ENCODE measurements at regions of chr22 and their contacts with region 1.

Region 1: DNA sequence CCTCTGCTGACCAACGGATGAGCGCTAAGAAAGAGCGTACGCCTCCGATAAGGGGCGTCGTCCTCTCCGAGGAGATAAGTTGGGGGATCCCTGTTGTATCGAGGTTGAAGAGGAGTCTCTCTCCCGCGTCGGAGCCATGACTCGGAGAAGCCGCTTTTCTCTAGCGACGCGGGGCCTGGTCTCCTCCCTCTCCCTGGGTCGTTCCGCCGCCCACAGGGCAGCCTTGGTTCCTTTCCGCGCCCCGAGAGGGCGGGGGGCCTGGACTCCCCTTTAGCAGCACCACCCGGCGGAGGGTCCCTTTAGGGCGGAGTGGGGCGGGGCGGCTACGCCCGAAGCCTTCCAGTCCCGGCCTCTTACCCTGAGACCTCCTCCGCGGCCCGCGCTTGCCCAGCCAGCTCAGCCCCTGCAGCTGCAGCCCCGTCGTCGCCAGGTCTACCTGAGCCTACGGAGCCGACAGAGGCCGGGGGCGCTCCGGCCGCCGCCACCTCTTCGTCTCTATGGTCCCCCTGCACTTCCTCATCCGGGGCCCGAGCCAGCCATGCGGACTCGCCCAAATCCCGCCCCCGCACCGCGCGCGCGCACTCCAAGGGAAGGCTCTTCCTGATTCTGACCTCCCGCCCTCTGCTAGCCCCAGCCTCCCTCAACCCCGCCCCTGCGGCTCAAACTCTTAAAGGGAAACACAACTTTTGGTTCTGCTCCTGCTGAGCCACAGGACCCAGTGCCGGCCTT is at the start of gene PRR14L:
- DNase-seq: peak; percentile 91
- ATAC-seq: peak; percentile 83
- H3K4me3 ChIP-seq: peak within 1 kb of the TSS; percentile 79 to 96 (median 89)
- H3K27ac ChIP-seq: peak within 1 kb of the TSS; percentile 93
- H3K4me1 ChIP-seq: peaks cover 41% of the 10 kb centered on the region
- H3K27me3 ChIP-seq: peaks cover 0 to 6% of the 10 kb centered on the region in 2 experiments; a peak in 1 of 5 replicates
- CTCF ChIP-seq: peak; percentile 31; the same call in 1 of the 2 replicates
- EP300 ChIP-seq: peak; percentile 31 to 92; a peak in 3 of 4 replicates
- POLR2A ChIP-seq: peak; percentile 85 to 89
- RAD21 ChIP-seq: peak; percentile 69
- total RNA-seq, gene PRR14L: 16.5 and 36.4 TPM in 2 replicates

Region 2: GRCh38 chr22:31812977-31813605 is 63.3 kb after region 1 on chr22:
- CTCF ChIA-PET with region 1: no interaction called
- POLR2A ChIA-PET with region 1: interaction called, 23 read pairs
- in situ Hi-C with region 1: no loop called
- intact Hi-C with region 1: loop called (anchors 1 kb)
- DNase-seq: peak; percentile 22
- ATAC-seq: peak; percentile 26; the same call in 1 of the 3 replicates
- H3K4me3 ChIP-seq: no peak overlapping the region
- H3K27ac ChIP-seq: peak overlapping the region; percentile 36
- H3K4me1 ChIP-seq: peaks cover 40% of the 10 kb centered on the region
- H3K27me3 ChIP-seq: no peaks in the 10 kb centered on the region
- CTCF ChIP-seq: no peak
- EP300 ChIP-seq: peak in 1 of 2 experiments; percentile 23; a peak in 1 of 4 replicates
- POLR2A ChIP-seq: no peak
- RAD21 ChIP-seq: no peak

Region 3: DNA sequence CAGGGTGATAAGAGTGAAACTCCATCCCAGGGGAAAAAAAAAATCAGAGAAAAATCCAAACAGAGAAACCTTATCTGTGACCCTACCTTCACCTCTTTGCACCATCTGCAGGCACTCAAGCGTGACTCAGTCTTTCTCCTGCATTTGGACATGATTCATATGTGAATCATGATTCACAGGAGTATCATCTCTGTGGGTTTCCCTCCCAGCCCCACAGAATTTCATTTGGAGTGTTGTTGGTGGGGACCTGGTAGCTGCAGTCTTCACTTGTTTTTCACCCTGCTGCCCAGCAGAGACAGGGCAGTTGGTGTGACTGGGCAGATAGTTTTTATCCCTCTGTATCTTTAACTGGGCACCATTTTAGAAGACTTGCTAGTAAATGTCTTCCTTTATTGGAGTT is 79.7 kb after region 1 on chr22:
- CTCF ChIA-PET with region 1: no interaction called
- POLR2A ChIA-PET with region 1: interaction called, 10 read pairs
- in situ Hi-C with region 1: no loop called
- intact Hi-C with region 1: no loop called
- DNase-seq: peak; percentile 46
- ATAC-seq: no peak
- H3K4me3 ChIP-seq: no peak overlapping the region
- H3K27ac ChIP-seq: no peak overlapping the region
- H3K4me1 ChIP-seq: peaks cover 16% of the 10 kb centered on the region
- H3K27me3 ChIP-seq: no peaks in the 10 kb centered on the region
- CTCF ChIP-seq: no peak
- EP300 ChIP-seq: peak in 1 of 2 experiments; percentile 9; a peak in 1 of 4 replicates
- POLR2A ChIP-seq: no peak
- RAD21 ChIP-seq: no peak

Region 4: DNA sequence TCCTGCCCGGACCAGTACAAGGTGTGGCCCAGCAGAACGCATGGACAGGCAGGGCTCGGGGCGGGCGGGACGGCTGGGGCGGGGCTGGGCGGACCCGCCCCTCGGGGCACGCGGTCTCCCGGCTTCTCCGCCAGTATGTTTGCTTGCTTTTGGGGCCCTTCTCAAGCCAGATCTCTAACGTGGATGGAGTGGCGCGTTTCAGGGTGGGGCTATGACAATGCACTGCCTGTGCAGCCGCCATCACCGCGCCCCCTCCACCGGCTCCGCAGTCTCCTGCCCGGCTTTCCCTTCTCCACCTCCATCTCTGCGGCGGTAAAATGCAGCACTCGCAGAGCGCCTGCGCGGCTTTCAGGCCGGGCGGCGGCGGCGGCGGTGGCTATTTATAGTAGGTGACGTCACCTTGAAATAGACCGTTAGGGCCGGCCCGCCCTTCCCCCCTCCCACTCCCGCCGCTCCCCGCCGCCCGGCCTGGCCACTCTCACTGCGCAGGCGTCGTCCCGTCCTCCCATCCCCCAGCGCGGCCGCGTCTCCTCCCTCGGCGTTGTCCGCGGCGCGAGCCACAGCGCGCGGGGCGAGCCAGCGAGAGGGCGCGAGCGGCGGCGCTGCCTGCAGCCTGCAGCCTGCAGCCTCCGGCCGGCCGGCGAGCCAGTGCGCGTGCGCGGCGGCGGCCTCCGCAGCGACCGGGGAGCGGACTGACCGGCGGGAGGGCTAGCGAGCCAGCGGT is 194.3 kb after region 1 on chr22 and contains the start of gene YWHAH:
- CTCF ChIA-PET with region 1: no interaction called
- POLR2A ChIA-PET with region 1: interaction called, 3 read pairs
- in situ Hi-C with region 1: loop called (anchors 10 kb)
- intact Hi-C with region 1: no loop called
- DNase-seq: peak; percentile 88
- ATAC-seq: peak; percentile 81
- H3K4me3 ChIP-seq: peak within 1 kb of the TSS; percentile 61 to 94 (median 94)
- H3K27ac ChIP-seq: peak within 1 kb of the TSS; percentile 86
- H3K4me1 ChIP-seq: peaks cover 44% of the 10 kb centered on the region
- H3K27me3 ChIP-seq: no peaks in the 10 kb centered on the region; a peak in 1 of 5 replicates
- CTCF ChIP-seq: no peak; the same call in 1 of the 2 replicates
- EP300 ChIP-seq: no peak
- POLR2A ChIP-seq: peak; percentile 69 to 84
- RAD21 ChIP-seq: no peak
- total RNA-seq, gene YWHAH: 92.7 and 112 TPM in 2 replicates

Region 5: DNA sequence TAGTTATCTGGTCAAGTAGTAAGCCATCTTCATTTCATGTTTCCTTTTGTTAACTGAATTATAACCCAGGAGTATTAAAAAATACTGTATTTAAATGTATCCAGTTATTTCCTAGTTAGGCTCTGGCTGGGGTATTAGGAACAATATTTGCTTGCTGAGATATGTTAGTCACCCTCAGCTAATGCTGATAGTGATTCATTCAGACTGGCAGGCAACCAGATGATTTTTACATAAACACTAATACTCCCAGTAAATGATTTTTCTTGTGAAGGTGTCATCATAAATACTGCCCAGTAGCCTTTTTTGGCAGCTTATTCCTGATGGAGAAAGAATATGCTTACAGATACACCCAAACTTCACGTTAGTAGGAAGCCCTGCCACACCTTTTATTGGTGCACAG is 202.7 kb after region 1 on chr22:
- CTCF ChIA-PET with region 1: no interaction called
- POLR2A ChIA-PET with region 1: interaction called, 3 read pairs
- in situ Hi-C with region 1: loop called (anchors 10 kb)
- intact Hi-C with region 1: loop called (anchors 1 kb)
- DNase-seq: no peak
- ATAC-seq: no peak
- H3K4me3 ChIP-seq: no peak overlapping the region
- H3K27ac ChIP-seq: no peak overlapping the region
- H3K4me1 ChIP-seq: peaks cover 25% of the 10 kb centered on the region
- H3K27me3 ChIP-seq: no peaks in the 10 kb centered on the region
- CTCF ChIP-seq: no peak
- EP300 ChIP-seq: no peak
- POLR2A ChIP-seq: no peak
- RAD21 ChIP-seq: no peak